ENCODE measurements at regions of chr13 and their contacts with region 1.

Region 1: GRCh38 chr13:31909864-31910551 is 121.6 kb upstream of the FRY start:
- DNase-seq: peak; percentile 30
- CTCF ChIP-seq: peak; percentile 87

Region 2: DNA sequence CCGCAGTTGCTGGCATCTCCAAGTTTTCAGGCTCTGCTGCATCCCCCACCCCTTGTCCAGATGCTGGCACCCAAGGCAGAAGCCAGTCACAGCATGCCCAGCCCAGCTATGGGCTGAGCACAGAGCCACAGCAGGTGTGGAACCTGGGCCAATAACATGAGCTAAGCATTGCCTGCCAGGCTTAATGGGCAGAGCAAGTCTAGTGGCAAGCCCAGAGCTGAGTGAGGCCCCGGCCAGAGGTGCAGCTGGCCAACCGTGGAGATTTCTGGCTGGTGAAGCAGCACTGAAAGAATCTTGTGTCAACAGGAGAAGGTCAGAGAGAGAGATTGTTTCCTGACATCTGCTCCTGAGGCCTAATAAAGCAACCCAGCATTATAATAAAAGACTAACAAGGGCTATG is 599.2 kb before region 1 on chr13:
- CTCF ChIA-PET with region 1: no interaction called
- POLR2A ChIA-PET with region 1: no interaction called
- DNase-seq: no peak
- CTCF ChIP-seq: no peak

Region 3: DNA sequence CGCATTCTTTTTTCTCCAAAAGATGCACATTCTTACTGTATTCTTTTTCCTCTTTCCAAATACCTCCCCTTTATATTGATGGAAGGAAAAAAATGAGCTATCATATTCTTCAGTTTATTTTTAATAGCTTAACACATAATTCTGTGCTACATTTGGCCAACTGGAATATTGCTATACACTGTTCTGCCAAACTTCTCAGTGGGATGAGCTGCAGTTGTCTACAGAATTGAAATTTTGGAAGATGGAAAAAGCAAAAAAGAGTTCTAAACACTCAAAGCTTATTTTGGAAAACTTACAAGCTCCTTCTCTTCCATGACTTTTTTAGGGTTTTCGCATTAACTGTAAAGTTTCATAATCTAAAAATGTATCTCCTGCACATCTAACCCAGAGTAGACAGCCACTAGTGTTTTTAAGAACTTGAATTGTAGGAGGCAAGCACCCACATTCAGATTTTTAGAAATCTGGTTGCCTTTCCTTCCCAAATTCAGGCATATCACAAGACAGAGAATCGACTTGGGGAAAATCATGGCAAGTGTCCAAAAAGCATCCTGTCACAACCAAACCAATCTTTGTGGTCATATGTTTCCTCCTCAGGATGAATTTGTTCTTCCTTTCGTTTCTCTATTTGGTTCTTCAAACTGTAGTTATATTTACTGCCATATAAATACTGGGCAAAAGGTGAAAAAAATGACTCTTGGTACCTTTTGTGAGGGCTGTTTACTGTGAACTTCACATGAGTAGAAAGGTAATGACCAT is 10.1 kb after region 1 on chr13:
- CTCF ChIA-PET with region 1: interaction called, 62 read pairs
- POLR2A ChIA-PET with region 1: interaction called, 3 read pairs
- DNase-seq: no peak
- CTCF ChIP-seq: no peak

Region 4: GRCh38 chr13:31965361-31966066 is 55.5 kb after region 1 on chr13:
- CTCF ChIA-PET with region 1: interaction called, 13 read pairs
- POLR2A ChIA-PET with region 1: no interaction called
- DNase-seq: peak; percentile 46
- CTCF ChIP-seq: no peak

Region 5: DNA sequence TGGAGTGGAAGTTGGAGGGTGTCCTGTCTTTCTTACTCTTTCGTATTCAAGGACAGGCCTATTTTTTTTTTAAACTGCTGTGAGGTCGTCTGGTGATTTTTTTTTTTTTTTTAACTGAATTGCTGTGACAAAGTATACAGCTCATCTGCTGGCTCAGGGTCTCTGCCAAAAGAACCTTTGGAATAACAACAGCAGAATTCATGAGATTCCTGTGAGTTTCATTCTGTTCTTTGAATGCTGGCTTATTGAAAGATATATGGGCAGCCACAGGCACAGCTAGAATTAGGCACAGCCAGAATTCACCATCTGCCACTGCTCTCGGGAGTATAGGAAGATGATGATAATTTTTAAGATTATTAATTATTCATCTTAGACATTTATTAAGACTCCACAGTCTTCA is 100.1 kb after region 1 on chr13:
- CTCF ChIA-PET with region 1: interaction called, 10 read pairs
- POLR2A ChIA-PET with region 1: no interaction called
- DNase-seq: no peak
- CTCF ChIP-seq: no peak

Region 6: DNA sequence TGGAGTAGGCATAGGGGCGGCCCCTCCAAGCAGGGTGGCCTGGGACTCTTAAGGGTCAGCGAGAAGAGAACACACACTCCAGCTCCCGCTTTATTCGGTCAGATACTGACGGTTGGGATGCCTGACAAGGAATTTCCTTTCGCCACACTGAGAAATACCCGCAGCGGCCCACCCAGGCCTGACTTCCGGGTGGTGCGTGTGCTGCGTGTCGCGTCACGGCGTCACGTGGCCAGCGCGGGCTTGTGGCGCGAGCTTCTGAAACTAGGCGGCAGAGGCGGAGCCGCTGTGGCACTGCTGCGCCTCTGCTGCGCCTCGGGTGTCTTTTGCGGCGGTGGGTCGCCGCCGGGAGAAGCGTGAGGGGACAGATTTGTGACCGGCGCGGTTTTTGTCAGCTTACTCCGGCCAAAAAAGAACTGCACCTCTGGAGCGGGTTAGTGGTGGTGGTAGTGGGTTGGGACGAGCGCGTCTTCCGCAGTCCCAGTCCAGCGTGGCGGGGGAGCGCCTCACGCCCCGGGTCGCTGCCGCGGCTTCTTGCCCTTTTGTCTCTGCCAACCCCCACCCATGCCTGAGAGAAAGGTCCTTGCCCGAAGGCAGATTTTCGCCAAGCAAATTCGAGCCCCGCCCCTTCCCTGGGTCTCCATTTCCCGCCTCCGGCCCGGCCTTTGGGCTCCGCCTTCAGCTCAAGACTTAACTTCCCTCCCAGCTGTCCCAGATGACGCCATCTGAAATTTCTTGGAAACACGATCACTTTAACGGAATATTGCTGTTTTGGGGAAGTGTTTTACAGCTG is 405.4 kb after region 1 on chr13 and contains the starts of genes BRCA2 and ZAR1L:
- CTCF ChIA-PET with region 1: interaction called, 10 read pairs
- POLR2A ChIA-PET with region 1: no interaction called
- DNase-seq: peak; percentile 89
- CTCF ChIP-seq: no peak

Measured in GM10248 (cell line).